ENCODE measurements at regions of chr14 and their contacts with region 1.

Region 1: DNA sequence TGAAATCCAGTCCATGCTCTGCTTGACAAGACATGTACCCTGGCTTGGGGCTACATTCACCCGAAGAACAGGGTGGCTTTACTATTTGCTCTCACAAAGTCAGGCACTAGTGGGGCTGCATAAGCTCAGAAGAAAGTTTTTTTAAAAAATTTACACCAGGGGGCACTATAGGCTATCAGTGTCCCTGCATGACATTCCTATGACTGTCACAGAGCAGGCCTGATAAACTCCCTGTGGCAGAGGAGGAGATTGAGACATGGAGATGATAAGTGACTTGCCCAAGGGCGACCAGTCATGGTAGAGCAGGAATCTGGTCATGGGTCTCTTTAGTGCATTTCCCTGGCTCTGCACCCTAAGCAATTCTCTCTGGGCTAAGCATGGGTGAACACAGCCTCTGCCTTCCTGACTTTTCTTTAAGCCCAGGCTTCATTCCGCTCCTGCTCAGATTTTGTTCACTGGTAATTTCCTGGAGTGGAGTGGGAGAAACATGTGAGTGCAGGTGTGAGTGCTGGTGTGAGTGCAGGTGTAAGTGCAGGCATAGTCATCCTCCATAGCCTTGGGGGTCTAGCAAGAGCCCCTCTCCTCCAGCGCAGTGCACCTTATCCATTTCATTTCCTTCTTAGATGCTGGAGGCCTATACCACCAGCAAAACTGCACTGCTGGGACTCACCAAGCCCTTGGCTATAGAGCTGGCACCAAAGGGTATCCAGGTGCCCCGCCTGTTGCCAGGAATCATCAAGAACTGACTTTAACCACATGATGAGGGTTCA is 91.6 kb downstream of the DHRS2 start:
- DNase-seq: peak; percentile 29 to 86
- H3K4me3 ChIP-seq: no peak overlapping the region
- H3K27ac ChIP-seq: peak overlapping the region; percentile 100
- H3K4me1 ChIP-seq: peaks cover 54% of the 10 kb centered on the region
- H3K27me3 ChIP-seq: no peaks in the 10 kb centered on the region
- CTCF ChIP-seq: peak; percentile 64

Region 2: DNA sequence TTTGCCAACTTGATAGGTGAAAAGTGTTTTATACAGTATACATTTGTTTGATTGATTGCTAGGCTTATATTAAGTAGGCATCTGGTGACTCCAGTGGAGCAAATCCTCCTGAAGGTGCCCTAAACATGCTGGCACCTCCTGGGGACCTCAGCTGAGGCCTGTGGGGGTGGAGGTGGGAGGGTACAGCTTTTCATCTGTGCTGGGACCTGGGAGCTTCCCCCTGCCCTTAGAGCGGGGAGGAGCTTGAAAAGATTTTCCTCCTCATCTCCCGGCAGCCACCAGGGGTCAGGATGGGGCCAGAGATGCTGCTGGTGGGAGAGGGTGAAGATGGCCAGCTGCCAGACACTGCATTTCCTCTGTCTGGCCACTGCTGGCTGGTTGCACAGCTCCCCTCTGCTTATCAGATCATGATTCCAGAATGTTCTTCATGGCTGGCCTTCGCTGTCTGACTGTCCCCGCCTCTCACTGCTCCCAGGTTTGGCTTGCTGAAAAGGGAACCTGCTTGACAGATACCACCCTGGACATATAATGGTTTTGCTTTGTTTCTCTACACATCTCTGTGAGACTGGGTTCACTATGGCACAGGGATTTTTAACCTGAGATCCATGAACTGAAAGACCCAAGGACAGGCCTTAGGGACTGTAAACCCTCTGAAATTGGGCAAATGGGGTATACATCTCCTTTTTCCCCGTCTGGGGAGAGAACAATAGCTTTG is 138.7 kb before region 1 on chr14:
- CTCF ChIA-PET with region 1: interaction called, 3 read pairs
- POLR2A ChIA-PET with region 1: no interaction called
- intact Hi-C with region 1: loop called (anchors 1 kb)
- DNase-seq: peak; percentile 62 to 83
- H3K4me3 ChIP-seq: no peak overlapping the region
- H3K27ac ChIP-seq: no peak overlapping the region
- H3K4me1 ChIP-seq: peaks cover 7% of the 10 kb centered on the region; the same call in 1 of the 2 replicates
- H3K27me3 ChIP-seq: no peaks in the 10 kb centered on the region
- CTCF ChIP-seq: peak; percentile 78

Region 3: DNA sequence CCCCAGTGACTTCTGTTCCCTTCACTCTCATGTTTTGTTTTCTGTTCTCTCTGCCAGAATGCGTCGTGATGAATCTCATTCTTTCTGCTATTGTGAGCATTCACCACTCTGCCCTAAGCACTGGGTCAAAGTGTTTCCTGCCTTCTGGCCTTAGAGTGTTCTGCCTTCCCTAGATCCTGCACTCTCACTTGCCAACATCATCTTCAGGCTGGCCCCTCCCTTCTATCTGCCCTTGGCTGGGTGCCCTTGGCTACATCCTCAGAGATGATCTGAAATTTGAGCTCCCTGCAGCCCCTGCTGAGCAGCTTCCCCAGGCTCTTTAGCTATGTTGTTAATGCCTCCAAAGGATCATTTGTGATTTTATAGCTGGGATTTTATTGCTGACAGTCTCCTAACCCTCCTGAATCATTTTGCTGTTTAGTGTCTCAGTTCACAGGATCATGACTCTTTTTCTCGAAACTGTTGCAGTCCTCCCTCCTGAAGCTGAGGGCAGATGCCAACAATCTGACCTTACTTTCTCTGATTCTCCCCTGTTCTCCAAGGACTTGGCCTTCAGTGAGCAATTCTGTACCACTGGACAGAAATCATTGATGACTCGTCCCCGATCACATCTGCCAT is 87.1 kb before region 1 on chr14:
- CTCF ChIA-PET with region 1: no interaction called
- POLR2A ChIA-PET with region 1: no interaction called
- intact Hi-C with region 1: loop called (anchors 2 kb)
- DNase-seq: peak; percentile 71 to 74
- H3K4me3 ChIP-seq: peak overlapping the region; percentile 62; the same call in 1 of the 2 replicates
- H3K27ac ChIP-seq: peak overlapping the region; percentile 82
- H3K4me1 ChIP-seq: peaks cover 59% of the 10 kb centered on the region
- H3K27me3 ChIP-seq: no peaks in the 10 kb centered on the region
- CTCF ChIP-seq: no peak

Region 4: GRCh38 chr14:23694085-23694975 is 33.4 kb before region 1 on chr14:
- CTCF ChIA-PET with region 1: interaction called, 19 read pairs
- POLR2A ChIA-PET with region 1: interaction called, 3 read pairs
- intact Hi-C with region 1: loop called (anchors 1 kb)
- DNase-seq: peak; percentile 75 to 96
- H3K4me3 ChIP-seq: peak overlapping the region; percentile 31; the same call in 1 of the 2 replicates
- H3K27ac ChIP-seq: peak overlapping the region; percentile 98
- H3K4me1 ChIP-seq: peaks cover 53% of the 10 kb centered on the region
- H3K27me3 ChIP-seq: no peaks in the 10 kb centered on the region
- CTCF ChIP-seq: no peak

Region 5: DNA sequence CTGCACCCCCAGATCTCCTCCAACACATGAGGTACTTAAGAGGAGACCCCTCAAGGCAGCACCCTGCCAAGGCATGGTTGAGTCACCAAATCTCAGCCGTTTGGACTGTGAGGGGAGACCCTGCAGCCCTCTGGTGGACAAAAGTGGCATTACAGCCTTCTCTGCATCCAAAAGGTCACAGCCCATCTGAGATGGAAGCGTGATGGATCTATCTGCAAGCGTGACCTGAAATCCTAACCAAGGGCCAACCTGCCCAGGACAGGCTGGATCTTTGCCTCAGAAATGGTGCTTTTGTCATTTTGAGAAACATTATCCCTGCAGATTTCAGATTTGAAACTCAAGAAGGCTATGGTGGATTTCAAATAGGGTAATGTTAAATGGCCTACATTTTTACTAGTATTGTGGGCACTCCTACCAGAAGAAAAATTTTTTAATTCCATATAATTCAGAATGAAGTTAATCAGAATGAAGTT is 202.1 kb after region 1 on chr14:
- CTCF ChIA-PET with region 1: no interaction called
- POLR2A ChIA-PET with region 1: no interaction called
- intact Hi-C with region 1: loop called (anchors 1 kb)
- DNase-seq: peak in 1 of 2 experiments; percentile 47
- H3K4me3 ChIP-seq: no peak overlapping the region
- H3K27ac ChIP-seq: no peak overlapping the region
- H3K4me1 ChIP-seq: no peaks in the 10 kb centered on the region
- H3K27me3 ChIP-seq: no peaks in the 10 kb centered on the region
- CTCF ChIP-seq: peak; percentile 89

Region 6: DNA sequence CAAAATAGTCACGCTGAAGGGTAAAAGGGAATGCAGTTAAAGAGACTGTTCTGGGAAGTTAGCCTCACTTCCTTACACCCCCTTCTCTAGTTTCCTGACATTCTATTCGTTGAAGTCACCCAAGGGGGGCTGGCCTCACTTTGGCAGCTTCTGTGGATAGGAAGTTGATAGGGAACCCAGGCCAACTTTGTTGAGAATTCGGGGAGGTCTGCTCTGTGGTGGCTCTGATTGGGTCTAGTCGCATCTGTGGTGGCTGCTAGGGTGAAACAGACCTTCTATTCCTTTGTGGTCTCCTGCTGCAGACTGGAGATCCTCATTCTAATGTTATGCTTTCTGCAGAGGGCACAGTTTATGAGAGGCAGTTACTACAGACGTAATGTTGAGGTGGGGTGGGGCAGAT is 935.0 kb after region 1 on chr14:
- CTCF ChIA-PET with region 1: no interaction called
- POLR2A ChIA-PET with region 1: no interaction called
- intact Hi-C with region 1: no loop called
- DNase-seq: no peak
- H3K4me3 ChIP-seq: no peak overlapping the region
- H3K27ac ChIP-seq: no peak overlapping the region
- H3K4me1 ChIP-seq: no peaks in the 10 kb centered on the region
- H3K27me3 ChIP-seq: no peaks in the 10 kb centered on the region; the same call in 1 of the 2 replicates
- CTCF ChIP-seq: no peak